T-cell (primary cell): ENCODE measurements at regions of chr6 and their contacts with region 1.

Region 1: DNA sequence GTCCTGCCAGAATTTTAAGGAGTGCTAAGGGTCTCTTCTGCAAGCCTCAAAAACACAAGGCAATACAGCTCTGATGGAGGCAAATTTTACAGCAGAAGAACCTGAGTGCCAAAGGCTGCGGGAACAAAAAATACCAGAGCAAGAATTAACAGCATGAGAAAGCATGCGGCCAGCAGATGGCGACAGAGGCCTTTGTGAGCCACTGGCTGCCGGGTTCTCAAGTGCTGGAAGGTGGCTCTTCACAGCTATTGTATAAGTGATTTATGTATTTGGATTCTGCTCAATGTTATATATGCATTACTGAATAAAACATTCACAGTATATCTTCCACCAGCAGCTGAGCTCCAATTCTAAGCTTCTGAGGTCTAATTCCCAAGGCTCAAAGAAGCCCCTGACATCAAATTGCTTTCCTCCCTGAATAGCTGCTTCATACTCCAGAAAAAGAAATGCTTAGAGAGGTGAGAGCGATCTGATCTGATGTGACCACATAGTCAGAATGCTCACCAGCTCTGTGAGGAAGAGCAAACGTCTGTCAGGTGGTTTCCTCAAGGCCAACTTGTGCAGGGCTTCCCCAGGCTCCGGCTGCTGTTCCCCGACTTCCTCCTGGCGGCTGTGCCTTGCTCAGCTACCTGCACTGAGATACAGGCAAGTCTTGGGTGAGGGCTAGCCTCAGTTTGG is 58.6 kb downstream of the PPP1R3G start:
- DNase-seq: peak; percentile 58 to 90 (median 79)
- ATAC-seq: peak; percentile 49 to 81 (median 64)
- H3K4me3 ChIP-seq: no peak overlapping the region
- H3K4me3 Mint-ChIP-seq: no peak overlapping the region
- H3K27ac ChIP-seq: no peak overlapping the region
- H3K27ac Mint-ChIP-seq: no peak overlapping the region
- H3K4me1 ChIP-seq: peaks cover 2 to 4% of the 10 kb centered on the region in 2 experiments
- H3K4me1 Mint-ChIP-seq: peaks cover 1 to 10% (median 2%) of the 10 kb centered on the region in 3 donors
- H3K27me3 ChIP-seq: no peaks in the 10 kb centered on the region
- H3K27me3 Mint-ChIP-seq: no peaks in the 10 kb centered on the region

Region 2: DNA sequence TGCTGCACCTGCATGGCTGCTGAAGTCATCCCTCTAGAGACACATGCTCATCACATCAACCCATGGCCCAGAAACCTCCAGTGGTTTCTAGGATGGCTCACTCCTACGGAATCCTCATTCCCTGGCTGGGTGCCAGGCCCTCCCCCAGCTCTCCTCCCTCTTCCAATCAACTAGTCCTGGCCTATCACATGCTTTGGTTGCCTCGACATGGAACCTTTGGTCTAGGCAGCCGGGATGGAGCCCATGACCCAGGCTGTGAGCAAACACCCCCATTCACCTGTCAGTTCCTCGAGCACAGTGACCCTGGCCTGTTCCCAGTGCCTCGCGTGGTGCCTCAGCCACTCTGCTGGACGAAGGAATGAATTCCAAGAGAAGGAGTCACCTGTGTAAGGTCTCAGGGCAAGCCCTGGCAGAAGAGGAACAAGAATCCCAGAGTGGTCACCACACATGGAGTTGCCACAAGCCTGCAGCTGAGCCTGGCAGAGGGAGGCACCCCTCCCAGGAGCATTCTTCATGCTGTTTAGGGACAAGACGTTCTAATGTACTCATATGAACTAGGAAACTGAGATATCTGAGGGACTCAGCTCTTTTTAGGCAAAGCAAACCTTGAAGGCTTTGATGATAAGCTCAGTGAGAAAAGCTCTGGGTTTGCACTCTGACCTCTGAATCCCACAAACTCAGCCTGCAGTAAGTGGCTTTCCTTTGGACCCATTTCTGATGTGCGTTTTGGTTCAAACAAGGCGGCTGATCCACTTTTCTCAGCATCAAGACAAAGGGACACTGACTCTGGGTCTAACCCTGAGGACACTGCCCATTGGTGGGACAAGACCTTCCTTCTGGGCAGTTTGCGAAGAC is 18.4 kb before region 1 on chr6:
- CTCF ChIA-PET with region 1: no interaction called
- POLR2A ChIA-PET with region 1: no interaction called
- DNase-seq: no peak
- ATAC-seq: no peak
- H3K4me3 ChIP-seq: no peak overlapping the region
- H3K4me3 Mint-ChIP-seq: no peak overlapping the region
- H3K27ac ChIP-seq: no peak overlapping the region
- H3K27ac Mint-ChIP-seq: no peak overlapping the region
- H3K4me1 ChIP-seq: peaks cover 0 to 2% of the 10 kb centered on the region in 2 experiments
- H3K4me1 Mint-ChIP-seq: peaks cover 0 to 14% (median 0%) of the 10 kb centered on the region in 3 donors
- H3K27me3 ChIP-seq: no peaks in the 10 kb centered on the region
- H3K27me3 Mint-ChIP-seq: no peaks in the 10 kb centered on the region

Region 3: DNA sequence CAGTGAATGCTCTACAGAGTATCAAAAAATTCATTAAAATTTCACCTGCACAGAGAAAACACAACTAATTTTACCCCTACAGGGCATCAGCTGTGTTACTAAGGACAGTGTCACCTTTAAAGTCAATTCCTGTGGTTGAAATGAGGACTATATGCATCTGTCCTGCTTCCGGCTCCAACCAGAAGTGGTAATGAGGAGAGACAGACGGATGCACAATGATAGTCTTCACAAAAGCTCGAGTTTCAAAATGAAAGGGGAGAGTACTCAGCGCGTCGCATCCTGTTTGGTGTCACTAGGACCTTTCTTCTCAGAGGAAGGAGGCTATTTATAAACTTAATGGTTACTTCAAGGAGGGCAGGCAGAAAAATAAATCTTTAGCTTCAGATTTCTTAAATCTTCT is 30.5 kb after region 1 on chr6:
- CTCF ChIA-PET with region 1: interaction called, 4 to 11 read pairs
- POLR2A ChIA-PET with region 1: interaction called in 1 of 2 experiments, 3 read pairs
- DNase-seq: peak; percentile 14 to 77 (median 49)
- ATAC-seq: peak; percentile 89 to 97 (median 94)
- H3K4me3 ChIP-seq: peak overlapping the region; percentile 2 to 19
- H3K4me3 Mint-ChIP-seq: peak overlapping the region; percentile 66 to 82 (median 69)
- H3K27ac ChIP-seq: peak overlapping the region; percentile 82
- H3K27ac Mint-ChIP-seq: peak overlapping the region; percentile 85 to 90
- H3K4me1 ChIP-seq: peaks cover 32 to 54% of the 10 kb centered on the region in 2 experiments
- H3K4me1 Mint-ChIP-seq: peaks cover 53 to 65% (median 54%) of the 10 kb centered on the region in 3 donors
- H3K27me3 ChIP-seq: no peaks in the 10 kb centered on the region
- H3K27me3 Mint-ChIP-seq: no peaks in the 10 kb centered on the region

Region 4: GRCh38 chr6:5302995-5303622 is 159.3 kb after region 1 on chr6:
- CTCF ChIA-PET with region 1: interaction called, 9 to 48 read pairs
- POLR2A ChIA-PET with region 1: no interaction called
- DNase-seq: peak; percentile 10 to 78 (median 44)
- ATAC-seq: peak; percentile 86 to 95 (median 90)
- H3K4me3 ChIP-seq: no peak overlapping the region
- H3K4me3 Mint-ChIP-seq: peak overlapping the region in 2 of 3 donors; percentile 32 to 41
- H3K27ac ChIP-seq: no peak overlapping the region
- H3K27ac Mint-ChIP-seq: peak overlapping the region in 1 of 2 donors; percentile 44
- H3K4me1 ChIP-seq: peaks cover 0 to 18% of the 10 kb centered on the region in 2 experiments
- H3K4me1 Mint-ChIP-seq: peaks cover 32 to 45% (median 40%) of the 10 kb centered on the region in 3 donors
- H3K27me3 ChIP-seq: no peaks in the 10 kb centered on the region
- H3K27me3 Mint-ChIP-seq: no peaks in the 10 kb centered on the region

Region 5: DNA sequence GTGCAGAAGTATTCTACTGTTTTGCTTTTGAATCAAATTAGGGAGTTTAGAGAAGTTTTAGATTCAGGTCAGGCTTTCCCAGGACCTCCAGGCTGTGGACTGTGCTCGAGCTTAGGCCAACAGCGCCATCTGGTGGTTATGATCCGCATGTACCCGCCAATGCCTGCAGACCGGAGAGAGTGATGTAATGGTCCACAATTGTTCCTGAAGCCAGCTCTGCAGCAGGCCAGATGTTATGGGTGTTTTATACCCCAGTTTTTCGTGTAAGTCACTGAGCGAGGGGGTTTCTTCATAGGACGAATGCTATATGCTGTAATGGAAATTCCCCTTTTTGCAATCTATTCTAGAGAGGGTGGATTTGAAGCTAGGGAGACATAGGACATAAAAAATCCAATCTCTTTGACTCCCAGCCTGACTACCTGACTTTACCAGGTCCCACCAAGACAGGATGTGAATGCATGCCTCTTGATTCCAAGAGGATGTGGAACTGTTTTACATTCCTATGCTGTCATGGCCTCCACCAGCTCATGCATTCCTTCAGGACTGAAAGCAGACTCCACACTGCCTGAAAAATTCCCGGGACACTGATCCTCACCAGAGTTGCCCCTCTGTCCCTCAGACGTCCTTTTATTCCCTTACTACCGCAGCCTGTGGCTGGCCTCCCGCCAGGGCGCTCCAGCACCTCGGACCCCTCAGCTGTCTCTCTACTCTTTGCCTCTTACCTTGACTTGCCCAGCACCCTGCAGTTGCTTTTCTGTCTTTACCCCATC is 1403.5 kb after region 1 on chr6:
- CTCF ChIA-PET with region 1: interaction called, 5 to 18 read pairs
- POLR2A ChIA-PET with region 1: no interaction called
- DNase-seq: peak; percentile 43 to 90 (median 73)
- ATAC-seq: peak; percentile 91 to 95 (median 92)
- H3K4me3 ChIP-seq: peak overlapping the region; percentile 26 to 70
- H3K4me3 Mint-ChIP-seq: peak overlapping the region; percentile 63 to 74 (median 68)
- H3K27ac ChIP-seq: no peak overlapping the region
- H3K27ac Mint-ChIP-seq: no peak overlapping the region
- H3K4me1 ChIP-seq: peaks cover 2 to 15% of the 10 kb centered on the region in 2 experiments
- H3K4me1 Mint-ChIP-seq: peaks cover 5 to 10% (median 6%) of the 10 kb centered on the region in 3 donors
- H3K27me3 ChIP-seq: peaks cover 2 to 56% of the 10 kb centered on the region in 2 experiments
- H3K27me3 Mint-ChIP-seq: peaks cover 20 to 51% of the 10 kb centered on the region in 2 donors